ENCODE measurements at regions of chr15 and their contacts with region 1.

Region 1: DNA sequence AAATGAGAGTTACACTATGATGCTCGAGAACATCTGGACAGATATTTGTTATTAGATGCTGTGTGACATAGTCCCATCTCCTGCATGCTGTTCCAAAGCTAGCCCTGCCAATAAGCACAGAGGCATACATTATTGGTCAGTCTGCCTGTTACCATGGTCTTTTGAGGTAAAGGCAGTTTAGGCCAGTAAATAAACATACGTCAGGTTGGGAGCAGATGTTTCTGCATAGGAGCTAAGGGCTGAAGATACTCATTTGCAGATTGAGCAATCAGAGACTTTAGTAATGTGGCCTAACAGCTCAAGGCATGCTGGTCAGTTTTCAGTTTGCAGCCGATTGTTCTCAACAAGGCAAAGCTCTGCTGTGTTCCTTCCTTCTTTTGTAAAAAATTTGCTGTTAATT is 192.9 kb downstream of the ADAMTSL3 start:
- DNase-seq: peak; percentile 90
- H3K4me3 ChIP-seq: no peak overlapping the region
- H3K27ac ChIP-seq: peak overlapping the region; percentile 83
- H3K27me3 ChIP-seq: no peaks in the 10 kb centered on the region
- CTCF ChIP-seq: no peak

Region 2: GRCh38 chr15:83904107-83905040 is 57.5 kb after region 1 on chr15:
- CTCF ChIA-PET with region 1: no interaction called
- POLR2A ChIA-PET with region 1: interaction called, 10 read pairs
- DNase-seq: peak; percentile 71
- H3K4me3 ChIP-seq: no peak overlapping the region
- H3K27ac ChIP-seq: peak overlapping the region; percentile 11
- H3K27me3 ChIP-seq: peaks cover 7% of the 10 kb centered on the region
- CTCF ChIP-seq: no peak

Measured in AG04450 (cell line).